Psoas muscle (tissue), 8 donors: ENCODE measurements at regions of chr1 and their contacts with region 1.

Region 1: DNA sequence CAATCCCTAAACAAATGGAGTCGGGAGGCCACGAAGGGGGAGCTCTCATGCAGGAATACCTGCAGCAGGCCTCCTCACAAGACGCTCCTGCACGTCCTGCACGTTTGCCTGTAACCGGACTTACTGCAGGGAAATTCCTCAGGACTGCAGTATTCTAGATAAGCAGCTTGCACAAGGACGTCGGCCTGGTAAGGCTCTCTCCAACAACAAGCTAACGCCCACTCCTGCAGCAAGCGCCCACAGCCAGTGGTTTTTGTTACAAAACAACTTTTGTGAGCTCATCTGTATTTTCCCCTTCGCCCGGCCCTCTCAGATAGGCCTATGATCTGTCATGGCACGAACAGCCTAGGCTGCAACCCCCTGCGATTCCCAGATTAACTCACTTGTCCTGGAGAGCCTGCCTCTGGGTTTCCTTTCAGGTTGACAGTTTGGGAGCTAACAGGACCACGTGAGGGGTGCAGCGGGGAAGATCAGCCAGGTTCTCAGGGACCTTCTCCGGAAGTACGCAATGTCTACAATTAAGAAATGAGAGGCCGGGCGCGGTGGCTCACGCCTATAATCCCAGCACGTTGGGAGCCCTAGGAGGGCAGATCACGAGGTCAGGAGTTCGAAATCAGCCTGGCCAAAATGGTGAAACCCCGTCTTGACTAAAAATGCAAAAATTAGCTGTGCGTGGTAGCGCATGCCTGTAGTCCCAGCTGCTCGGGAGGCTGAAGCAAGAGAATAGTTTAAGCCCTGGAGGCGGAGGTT is 921 bp upstream of the MIB2 start:
- DNase-seq: peak; percentile 20 to 54
- ATAC-seq: peak in 1 of 4 donors; percentile 1
- H3K4me3 ChIP-seq: peak overlapping the region; percentile 97
- H3K27ac ChIP-seq: peak overlapping the region; percentile 100
- H3K4me1 ChIP-seq: peaks cover 27% of the 10 kb centered on the region
- H3K27me3 ChIP-seq: no peaks in the 10 kb centered on the region
- CTCF ChIP-seq: no peak

Region 2: DNA sequence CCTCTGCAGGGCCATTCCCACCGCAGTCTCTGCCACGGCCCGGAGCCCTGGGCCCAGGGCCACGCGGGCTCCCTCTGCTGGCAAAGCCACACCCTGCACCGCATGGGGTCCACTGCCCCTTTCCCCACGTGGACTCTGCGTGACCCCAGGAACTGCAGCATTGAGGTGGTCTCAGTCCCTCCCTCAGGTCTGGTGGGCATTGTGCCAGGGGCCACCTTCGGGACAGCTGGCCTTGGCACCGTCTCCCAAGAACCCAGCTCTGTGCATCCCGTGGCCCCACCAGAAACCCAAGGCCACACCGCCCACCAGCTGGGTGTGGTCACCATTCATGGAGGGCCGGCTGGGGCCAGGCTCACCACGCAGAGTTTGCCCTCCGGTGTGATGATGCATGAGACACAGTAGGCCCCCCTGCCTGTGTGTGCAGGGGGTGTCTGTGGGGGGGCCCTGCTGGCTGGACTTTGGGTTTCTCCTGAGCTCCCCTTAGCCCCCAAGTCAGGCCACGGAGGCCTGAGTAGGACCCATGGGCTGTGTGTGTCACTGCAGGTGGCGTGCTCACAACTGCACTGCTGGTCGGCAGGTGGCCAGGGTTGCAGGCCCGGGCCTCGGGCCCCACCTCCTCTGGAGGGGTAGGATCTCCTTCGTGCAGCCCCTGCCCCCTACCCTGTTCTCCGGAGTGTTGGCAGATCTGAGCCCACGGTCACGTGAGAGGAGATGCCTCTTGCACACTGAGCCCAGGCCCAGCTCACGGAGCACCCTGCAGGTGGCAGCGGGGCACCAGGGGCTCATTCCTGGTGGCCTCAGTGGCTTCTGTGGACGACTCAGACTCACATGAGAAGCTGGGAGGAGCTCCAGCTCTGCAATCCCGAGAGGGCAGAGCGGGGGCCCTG is 173.1 kb before region 1 on chr1:
- intact Hi-C with region 1: no loop called
- DNase-seq: peak; percentile 64 to 80
- ATAC-seq: peak; percentile 82 to 95 (median 88)
- H3K4me3 ChIP-seq: peak overlapping the region; percentile 18
- H3K27ac ChIP-seq: no peak overlapping the region
- H3K4me1 ChIP-seq: peaks cover 18% of the 10 kb centered on the region
- H3K27me3 ChIP-seq: peaks cover 0 to 8% (median 0%) of the 10 kb centered on the region in 3 donors
- CTCF ChIP-seq: peak; percentile 87

Region 3: GRCh38 chr1:1574721-1575537 is 39.5 kb before region 1 on chr1 and contains the start of gene SSU72:
- intact Hi-C with region 1: loop called (anchors 5 kb)
- DNase-seq: peak; percentile 94 to 97
- ATAC-seq: peak; percentile 92 to 95 (median 94)
- H3K4me3 ChIP-seq: peak within 1 kb of the TSS; percentile 98
- H3K27ac ChIP-seq: peak within 1 kb of the TSS; percentile 100
- H3K4me1 ChIP-seq: peaks cover 17% of the 10 kb centered on the region
- H3K27me3 ChIP-seq: no peaks in the 10 kb centered on the region
- CTCF ChIP-seq: no peak
- total RNA-seq, gene SSU72: 130 to 185 (median 167) TPM